H1 (cell line): ENCODE measurements at regions of chr11 and their contacts with region 1.

Region 1: DNA sequence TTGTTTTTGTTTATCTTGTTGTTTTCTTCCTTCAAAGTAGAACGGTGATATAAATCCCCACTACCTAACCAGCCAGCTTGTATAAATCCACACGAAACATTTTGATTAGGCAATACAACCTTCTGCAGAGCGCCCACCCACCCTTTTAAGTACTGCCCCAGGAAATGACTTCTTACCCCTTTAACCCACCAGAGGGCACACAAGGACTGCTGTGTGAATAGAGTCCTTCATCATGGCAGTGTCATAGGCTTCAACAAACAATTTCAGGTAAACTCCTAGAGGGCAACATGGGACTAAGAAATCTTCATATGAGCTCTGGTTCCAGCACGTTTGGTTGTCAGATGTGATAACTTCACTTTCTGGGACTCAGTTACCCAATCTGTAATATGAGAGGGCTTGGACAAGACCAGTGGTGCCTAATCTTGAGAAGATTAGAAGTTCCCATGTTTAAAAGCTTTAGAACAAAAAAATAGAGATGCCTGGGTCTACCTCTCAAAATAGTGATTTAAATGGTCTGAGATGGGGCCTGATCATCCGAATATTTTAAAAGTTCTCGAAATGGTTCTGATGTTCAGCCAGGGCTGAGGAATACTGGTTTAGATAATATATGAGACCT is 56.1 kb downstream of the PIWIL4 start:
- DNase-seq: peak; percentile 43 to 78
- H3K4me3 ChIP-seq: no peak overlapping the region
- H3K27ac ChIP-seq: no peak overlapping the region
- H3K4me1 ChIP-seq: no peaks in the 10 kb centered on the region
- H3K27me3 ChIP-seq: no peaks in the 10 kb centered on the region; a peak in 1 of 7 replicates
- CTCF ChIP-seq: peak; percentile 27 to 97 (median 88)
- EP300 ChIP-seq: no peak
- POLR2A ChIP-seq: no peak
- RAD21 ChIP-seq: peak; percentile 100

Region 2: DNA sequence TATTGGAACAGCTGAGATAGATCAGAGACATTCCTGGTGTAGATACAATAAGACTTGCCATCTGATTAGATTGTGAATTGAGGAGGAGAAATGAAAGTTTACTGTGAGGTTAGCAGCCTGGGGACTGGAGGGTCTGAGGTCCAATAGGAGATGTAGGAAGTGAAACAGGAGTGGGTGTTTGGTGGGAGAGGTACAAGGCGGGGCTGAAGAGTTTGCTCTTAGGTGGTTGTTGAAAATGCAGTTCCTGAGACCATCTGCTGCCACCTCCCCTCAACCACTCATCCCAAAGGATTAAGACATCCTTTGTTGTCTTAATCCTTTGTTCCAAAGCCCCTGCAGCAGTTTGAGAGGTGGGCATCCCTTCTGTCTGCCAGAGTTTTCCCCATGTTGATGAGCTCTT is 41.3 kb before region 1 on chr11:
- CTCF ChIA-PET with region 1: no interaction called
- POLR2A ChIA-PET with region 1: no interaction called
- DNase-seq: no peak
- H3K4me3 ChIP-seq: no peak overlapping the region
- H3K27ac ChIP-seq: no peak overlapping the region
- H3K4me1 ChIP-seq: no peaks in the 10 kb centered on the region
- H3K27me3 ChIP-seq: no peaks in the 10 kb centered on the region
- CTCF ChIP-seq: no peak
- EP300 ChIP-seq: no peak
- POLR2A ChIP-seq: no peak
- RAD21 ChIP-seq: no peak

Region 3: GRCh38 chr11:94650756-94651155 is 27.5 kb after region 1 on chr11:
- CTCF ChIA-PET with region 1: interaction called, 12 read pairs
- POLR2A ChIA-PET with region 1: interaction called, 36 read pairs
- DNase-seq: no peak
- H3K4me3 ChIP-seq: peak overlapping the region; percentile 12 to 62 (median 32); a peak in 7 of 8 replicates
- H3K27ac ChIP-seq: peak overlapping the region; percentile 70
- H3K4me1 ChIP-seq: peaks cover 5 to 32% (median 17%) of the 10 kb centered on the region in 4 experiments; a peak in 6 of 7 replicates
- H3K27me3 ChIP-seq: no peaks in the 10 kb centered on the region
- CTCF ChIP-seq: no peak
- EP300 ChIP-seq: no peak
- POLR2A ChIP-seq: no peak; a peak in 1 of 3 replicates
- RAD21 ChIP-seq: no peak

Region 4: GRCh38 chr11:94731880-94732601 is 108.8 kb after region 1 on chr11:
- CTCF ChIA-PET with region 1: interaction called, 61 read pairs
- POLR2A ChIA-PET with region 1: no interaction called
- DNase-seq: no peak
- H3K4me3 ChIP-seq: no peak overlapping the region
- H3K27ac ChIP-seq: no peak overlapping the region
- H3K4me1 ChIP-seq: peaks cover 5 to 20% (median 15%) of the 10 kb centered on the region in 4 experiments
- H3K27me3 ChIP-seq: peaks cover 0 to 5% (median under 1%) of the 10 kb centered on the region in 4 experiments; a peak in 2 of 7 replicates
- CTCF ChIP-seq: no peak
- EP300 ChIP-seq: no peak
- POLR2A ChIP-seq: no peak
- RAD21 ChIP-seq: no peak

Region 5: GRCh38 chr11:94757037-94757735 is 134.0 kb after region 1 on chr11:
- CTCF ChIA-PET with region 1: interaction called, 24 read pairs
- POLR2A ChIA-PET with region 1: no interaction called
- DNase-seq: no peak
- H3K4me3 ChIP-seq: no peak overlapping the region
- H3K27ac ChIP-seq: no peak overlapping the region
- H3K4me1 ChIP-seq: peaks cover 0 to 3% (median 0%) of the 10 kb centered on the region in 4 experiments; a peak in 2 of 7 replicates
- H3K27me3 ChIP-seq: no peaks in the 10 kb centered on the region
- CTCF ChIP-seq: no peak
- EP300 ChIP-seq: no peak
- POLR2A ChIP-seq: no peak
- RAD21 ChIP-seq: no peak

Region 6: GRCh38 chr11:94885133-94885532 is 261.9 kb after region 1 on chr11:
- CTCF ChIA-PET with region 1: interaction called, 14 read pairs
- POLR2A ChIA-PET with region 1: no interaction called
- DNase-seq: no peak
- H3K4me3 ChIP-seq: no peak overlapping the region
- H3K27ac ChIP-seq: no peak overlapping the region
- H3K4me1 ChIP-seq: peaks cover 0 to 3% (median 0%) of the 10 kb centered on the region in 4 experiments; a peak in 1 of 7 replicates
- H3K27me3 ChIP-seq: no peaks in the 10 kb centered on the region
- CTCF ChIP-seq: no peak
- EP300 ChIP-seq: no peak
- POLR2A ChIP-seq: no peak
- RAD21 ChIP-seq: no peak